HepG2 (cell line): ENCODE measurements at regions of chr18 and their contacts with region 1.

Region 1: GRCh38 chr18:27110319-27110718 is 74.8 kb downstream of the CHST9 start:
- DNase-seq: no peak
- ATAC-seq: no peak
- H3K4me3 ChIP-seq: no peak overlapping the region
- H3K27ac ChIP-seq: no peak overlapping the region
- H3K4me1 ChIP-seq: no peaks in the 10 kb centered on the region
- H3K27me3 ChIP-seq: no peaks in the 10 kb centered on the region
- CTCF ChIP-seq: no peak
- EP300 ChIP-seq: no peak
- POLR2A ChIP-seq: no peak
- RAD21 ChIP-seq: no peak

Region 2: GRCh38 chr18:26792661-26793060 is 317.7 kb before region 1 on chr18:
- CTCF ChIA-PET with region 1: no interaction called
- POLR2A ChIA-PET with region 1: no interaction called
- in situ Hi-C with region 1: no loop called
- intact Hi-C with region 1: loop called (anchors 5 kb)
- DNase-seq: peak; percentile 13
- ATAC-seq: no peak
- H3K4me3 ChIP-seq: no peak overlapping the region
- H3K27ac ChIP-seq: no peak overlapping the region
- H3K4me1 ChIP-seq: no peaks in the 10 kb centered on the region
- H3K27me3 ChIP-seq: no peaks in the 10 kb centered on the region
- CTCF ChIP-seq: no peak
- EP300 ChIP-seq: no peak
- POLR2A ChIP-seq: no peak
- RAD21 ChIP-seq: no peak

Region 3: DNA sequence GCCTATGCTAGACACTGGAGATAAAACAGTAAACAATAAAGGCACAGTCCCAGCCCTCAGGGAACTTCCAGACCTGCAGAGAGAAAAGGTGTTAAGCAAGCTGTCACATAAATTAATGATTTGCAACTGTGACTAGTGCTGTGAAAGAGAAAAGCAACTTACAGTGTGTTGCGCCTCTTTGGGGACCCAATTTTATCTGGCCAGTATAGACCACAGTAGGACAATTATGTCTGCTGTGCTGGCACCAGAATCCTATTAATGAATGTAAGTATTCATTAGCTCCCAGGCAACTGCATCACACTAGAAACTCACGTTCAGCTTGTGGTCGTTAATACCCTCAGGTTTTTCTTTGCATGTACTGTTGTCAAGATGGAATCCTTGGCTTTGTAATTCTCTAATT is 130.1 kb after region 1 on chr18:
- CTCF ChIA-PET with region 1: no interaction called
- POLR2A ChIA-PET with region 1: no interaction called
- in situ Hi-C with region 1: no loop called
- intact Hi-C with region 1: no loop called
- DNase-seq: no peak
- ATAC-seq: no peak
- H3K4me3 ChIP-seq: no peak overlapping the region
- H3K27ac ChIP-seq: no peak overlapping the region
- H3K4me1 ChIP-seq: no peaks in the 10 kb centered on the region
- H3K27me3 ChIP-seq: no peaks in the 10 kb centered on the region
- CTCF ChIP-seq: no peak
- EP300 ChIP-seq: no peak
- POLR2A ChIP-seq: no peak
- RAD21 ChIP-seq: no peak